Activated B cell treated with CpG ODN at 0.5 μM for 24 hours (primary cell): ENCODE measurements at regions of chr2 and their contacts with region 1.

Region 1: DNA sequence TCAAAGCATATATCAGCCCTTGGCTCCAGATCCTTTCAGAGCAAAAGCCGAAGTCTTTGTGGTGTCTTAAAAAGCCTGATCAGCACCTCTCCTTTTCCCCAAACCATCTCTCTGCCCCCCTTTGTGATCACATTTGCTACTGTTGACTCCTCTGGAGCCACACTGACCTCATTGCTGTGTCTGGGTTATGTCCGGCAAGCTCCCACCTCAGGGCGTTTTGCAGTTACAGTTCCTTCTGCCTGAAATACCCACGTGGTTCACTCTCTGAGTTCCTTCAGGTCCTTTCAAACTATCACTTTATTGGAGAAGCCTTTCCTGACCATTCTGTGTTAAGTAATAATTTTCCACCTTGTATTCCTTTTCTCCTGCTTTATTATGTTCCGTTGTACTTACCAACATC is 11.8 kb downstream of the C2orf69 start:
- DNase-seq: no peak
- ATAC-seq: no peak
- H3K4me3 Mint-ChIP-seq: no peak overlapping the region
- H3K27ac Mint-ChIP-seq: no peak overlapping the region
- H3K4me1 Mint-ChIP-seq: peaks cover 4% of the 10 kb centered on the region
- H3K27me3 Mint-ChIP-seq: no peaks in the 10 kb centered on the region
- CTCF ChIP-seq: no peak

Region 2: DNA sequence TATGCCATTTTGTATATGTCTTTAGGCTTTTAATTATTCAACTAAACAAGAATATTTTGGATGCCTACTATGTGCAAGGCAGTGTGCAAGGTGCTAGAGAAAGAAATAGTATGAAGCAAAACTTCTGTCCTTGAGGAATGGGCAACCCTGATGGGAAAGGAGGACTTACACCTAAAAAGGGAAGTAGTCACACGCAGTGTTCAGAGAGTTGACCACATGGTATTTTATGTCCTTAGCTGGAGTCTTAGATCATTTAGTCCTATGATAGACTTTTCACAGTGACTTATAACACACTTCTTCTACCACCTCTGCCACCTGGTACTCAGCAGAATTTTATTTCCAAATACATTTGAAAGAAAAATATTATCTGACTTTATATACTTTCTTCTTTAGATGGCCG is 1826.9 kb before region 1 on chr2:
- CTCF ChIA-PET with region 1: no interaction called
- POLR2A ChIA-PET with region 1: no interaction called
- intact Hi-C with region 1: no loop called
- DNase-seq: no peak
- ATAC-seq: no peak
- H3K4me3 Mint-ChIP-seq: no peak overlapping the region
- H3K27ac Mint-ChIP-seq: no peak overlapping the region
- H3K4me1 Mint-ChIP-seq: no peaks in the 10 kb centered on the region
- H3K27me3 Mint-ChIP-seq: no peaks in the 10 kb centered on the region
- CTCF ChIP-seq: no peak

Region 3: DNA sequence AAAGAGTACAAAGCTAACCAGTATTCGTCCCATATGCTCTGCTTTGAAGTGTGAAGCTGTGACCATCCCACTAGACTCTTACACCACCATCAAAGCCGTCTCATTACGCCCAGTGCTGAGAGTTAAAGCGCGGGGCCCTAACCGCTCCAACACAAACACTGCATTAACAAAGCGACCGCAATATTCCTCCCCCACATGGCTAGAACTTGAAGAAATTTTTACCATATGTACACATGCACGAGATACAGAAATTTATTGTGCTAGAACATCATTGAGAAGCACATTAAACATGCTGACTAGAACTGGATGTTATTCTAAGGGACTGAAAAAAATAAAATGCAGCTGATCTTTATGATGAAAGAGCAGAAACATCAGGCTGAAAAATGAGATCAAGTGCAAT is 92.3 kb before region 1 on chr2:
- CTCF ChIA-PET with region 1: no interaction called
- POLR2A ChIA-PET with region 1: no interaction called
- intact Hi-C with region 1: no loop called
- DNase-seq: no peak
- ATAC-seq: no peak
- H3K4me3 Mint-ChIP-seq: no peak overlapping the region
- H3K27ac Mint-ChIP-seq: no peak overlapping the region
- H3K4me1 Mint-ChIP-seq: no peaks in the 10 kb centered on the region
- H3K27me3 Mint-ChIP-seq: no peaks in the 10 kb centered on the region
- CTCF ChIP-seq: no peak

Region 4: GRCh38 chr2:199940373-199940772 is 17.5 kb after region 1 on chr2:
- CTCF ChIA-PET with region 1: no interaction called
- POLR2A ChIA-PET with region 1: no interaction called
- intact Hi-C with region 1: loop called (anchors 2 kb)
- DNase-seq: no peak
- ATAC-seq: no peak
- H3K4me3 Mint-ChIP-seq: no peak overlapping the region
- H3K27ac Mint-ChIP-seq: no peak overlapping the region
- H3K4me1 Mint-ChIP-seq: no peaks in the 10 kb centered on the region
- H3K27me3 Mint-ChIP-seq: no peaks in the 10 kb centered on the region
- CTCF ChIP-seq: no peak